ENCODE measurements at regions of chr2 and their contacts with region 1.

Region 1: DNA sequence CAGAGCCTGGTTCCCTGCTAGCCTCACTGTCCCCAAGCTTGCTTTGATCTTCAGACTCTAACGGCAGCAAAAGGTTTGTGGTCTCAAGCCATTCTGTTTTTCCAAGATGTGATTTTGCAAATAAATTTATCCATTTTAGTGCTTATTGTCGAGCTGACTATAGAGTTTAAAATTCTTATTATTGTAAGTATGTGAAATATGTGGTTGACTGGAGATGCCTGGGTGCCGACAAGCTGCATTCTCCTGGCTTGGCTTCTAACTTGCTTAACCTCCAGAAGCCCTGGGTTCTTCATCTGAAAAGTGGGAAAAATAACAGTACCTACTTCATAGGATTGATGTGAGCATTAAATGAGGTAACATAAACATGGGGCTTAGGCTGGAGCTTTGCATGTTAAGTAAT is 9.9 kb upstream of the EDAR start:
- DNase-seq: no peak
- H3K4me3 ChIP-seq: no peak overlapping the region
- H3K27ac ChIP-seq: no peak overlapping the region
- H3K4me1 ChIP-seq: no peaks in the 10 kb centered on the region
- H3K27me3 ChIP-seq: no peaks in the 10 kb centered on the region; a peak in 1 of 7 replicates
- CTCF ChIP-seq: no peak
- EP300 ChIP-seq: no peak
- POLR2A ChIP-seq: no peak
- RAD21 ChIP-seq: no peak

Region 2: GRCh38 chr2:108935301-108935741 is 63.6 kb before region 1 on chr2:
- CTCF ChIA-PET with region 1: interaction called, 17 read pairs
- POLR2A ChIA-PET with region 1: no interaction called
- DNase-seq: no peak
- H3K4me3 ChIP-seq: no peak overlapping the region
- H3K27ac ChIP-seq: no peak overlapping the region
- H3K4me1 ChIP-seq: peaks cover 4 to 15% (median 11%) of the 10 kb centered on the region in 4 experiments
- H3K27me3 ChIP-seq: no peaks in the 10 kb centered on the region
- CTCF ChIP-seq: no peak
- EP300 ChIP-seq: no peak
- POLR2A ChIP-seq: no peak
- RAD21 ChIP-seq: no peak

Region 3: DNA sequence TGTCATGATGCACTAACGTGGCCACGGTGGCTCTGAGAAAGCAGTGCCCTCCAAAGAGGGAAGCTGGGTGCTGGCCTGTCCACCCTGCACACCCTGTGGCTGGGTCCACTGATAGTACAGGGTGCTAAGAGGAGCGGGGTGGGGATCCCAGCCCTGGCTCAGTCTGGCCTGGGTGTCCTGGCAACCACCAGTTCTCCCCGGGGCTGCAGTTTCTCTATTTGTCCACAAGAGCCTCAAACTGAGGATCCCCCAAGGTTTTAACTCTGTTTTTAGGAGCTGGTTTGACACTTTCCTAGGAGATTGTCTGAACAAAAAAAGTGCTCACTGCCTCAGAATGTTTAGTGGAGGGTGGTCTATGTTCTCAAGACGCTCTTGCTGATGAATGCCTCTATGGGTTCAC is 38.9 kb before region 1 on chr2:
- CTCF ChIA-PET with region 1: interaction called, 11 read pairs
- POLR2A ChIA-PET with region 1: no interaction called
- DNase-seq: no peak
- H3K4me3 ChIP-seq: no peak overlapping the region
- H3K27ac ChIP-seq: no peak overlapping the region
- H3K4me1 ChIP-seq: peaks cover 0 to 10% (median 1%) of the 10 kb centered on the region in 4 experiments; a peak in 3 of 7 replicates
- H3K27me3 ChIP-seq: no peaks in the 10 kb centered on the region
- CTCF ChIP-seq: peak in 2 of 3 experiments; percentile 1 to 33; a peak in 2 of 4 replicates
- EP300 ChIP-seq: no peak
- POLR2A ChIP-seq: no peak
- RAD21 ChIP-seq: peak in 1 of 2 experiments; percentile 15; a peak in 1 of 4 replicates

Region 4: DNA sequence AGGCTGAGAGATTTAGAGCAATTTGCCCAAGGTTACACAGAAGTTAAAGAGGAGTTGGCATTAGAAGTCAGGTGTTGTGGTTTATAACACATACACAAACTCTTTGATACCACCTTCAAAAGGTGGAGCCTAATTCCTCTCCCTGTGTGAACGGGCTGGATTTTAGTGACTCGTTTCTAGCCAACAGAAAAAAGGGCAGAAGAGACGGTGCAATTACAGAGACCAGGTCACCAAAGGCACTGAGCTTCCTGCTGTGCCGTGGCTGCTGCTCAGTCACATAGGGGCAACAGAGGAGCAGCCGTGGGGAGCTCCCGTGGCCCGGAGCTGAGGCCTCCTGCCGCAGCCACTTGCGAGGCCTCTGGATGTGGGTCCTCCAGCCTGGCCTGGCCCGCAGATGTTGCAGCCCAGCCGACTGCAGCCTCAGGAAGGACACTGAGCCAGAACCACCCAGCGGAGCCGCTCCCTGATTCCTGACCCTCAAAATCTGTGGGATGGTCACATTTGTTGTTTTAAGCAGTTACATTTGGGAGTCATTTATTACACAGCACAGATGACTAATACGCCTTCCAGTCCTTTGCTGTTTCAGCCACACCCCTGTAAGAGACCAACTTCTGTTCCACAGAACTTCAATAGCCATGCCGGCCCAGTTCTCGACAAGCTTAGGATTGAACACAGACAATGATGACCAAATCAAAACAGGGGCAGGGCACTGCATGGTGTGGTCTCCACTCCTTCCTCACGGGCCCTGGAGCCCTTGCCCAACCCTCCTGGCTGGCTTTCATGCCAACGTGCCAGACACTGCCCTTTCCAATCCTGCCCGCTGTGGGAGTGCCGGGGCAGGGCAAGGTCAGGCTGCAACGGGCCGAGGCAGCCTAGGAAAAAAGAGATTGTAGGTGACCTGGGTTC is 27.0 kb before region 1 on chr2:
- CTCF ChIA-PET with region 1: interaction called, 13 read pairs
- POLR2A ChIA-PET with region 1: no interaction called
- DNase-seq: no peak
- H3K4me3 ChIP-seq: no peak overlapping the region
- H3K27ac ChIP-seq: no peak overlapping the region
- H3K4me1 ChIP-seq: no peaks in the 10 kb centered on the region; a peak in 1 of 7 replicates
- H3K27me3 ChIP-seq: no peaks in the 10 kb centered on the region
- CTCF ChIP-seq: no peak
- EP300 ChIP-seq: no peak
- POLR2A ChIP-seq: no peak
- RAD21 ChIP-seq: no peak

Region 5: DNA sequence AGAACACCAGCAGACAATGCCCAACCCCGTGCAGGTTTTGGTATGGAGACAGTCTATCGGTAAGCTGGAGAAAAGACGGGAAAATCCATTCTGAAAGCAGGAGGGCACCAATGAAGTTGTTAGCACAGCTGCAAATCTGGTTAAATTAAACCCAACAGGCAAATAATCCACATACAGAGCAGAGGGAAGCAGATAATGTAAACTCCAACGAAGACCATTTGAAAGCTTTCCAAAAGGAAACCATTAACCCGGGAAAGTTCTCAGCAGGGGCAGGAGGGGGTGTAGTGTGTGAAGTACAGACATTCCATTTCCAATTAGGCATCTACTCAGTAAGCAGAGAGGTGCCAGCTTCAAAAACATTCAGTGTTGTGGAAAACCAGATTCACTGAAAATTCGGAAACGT is 20.2 kb before region 1 on chr2:
- CTCF ChIA-PET with region 1: interaction called, 13 read pairs
- POLR2A ChIA-PET with region 1: no interaction called
- DNase-seq: no peak
- H3K4me3 ChIP-seq: no peak overlapping the region
- H3K27ac ChIP-seq: no peak overlapping the region
- H3K4me1 ChIP-seq: no peaks in the 10 kb centered on the region
- H3K27me3 ChIP-seq: no peaks in the 10 kb centered on the region
- CTCF ChIP-seq: no peak
- EP300 ChIP-seq: no peak
- POLR2A ChIP-seq: no peak
- RAD21 ChIP-seq: no peak

Region 6: GRCh38 chr2:109009920-109010610 is 11.2 kb after region 1 on chr2:
- CTCF ChIA-PET with region 1: interaction called, 24 read pairs
- POLR2A ChIA-PET with region 1: no interaction called
- DNase-seq: no peak
- H3K4me3 ChIP-seq: no peak overlapping the region
- H3K27ac ChIP-seq: no peak overlapping the region
- H3K4me1 ChIP-seq: peaks cover 0 to 5% (median 2%) of the 10 kb centered on the region in 4 experiments; a peak in 3 of 7 replicates
- H3K27me3 ChIP-seq: no peaks in the 10 kb centered on the region
- CTCF ChIP-seq: no peak
- EP300 ChIP-seq: no peak
- POLR2A ChIP-seq: no peak
- RAD21 ChIP-seq: no peak

Region 7: GRCh38 chr2:109017017-109017416 is 18.1 kb after region 1 on chr2:
- CTCF ChIA-PET with region 1: interaction called, 24 read pairs
- POLR2A ChIA-PET with region 1: no interaction called
- DNase-seq: no peak
- H3K4me3 ChIP-seq: no peak overlapping the region
- H3K27ac ChIP-seq: no peak overlapping the region
- H3K4me1 ChIP-seq: peaks cover 3 to 16% (median 10%) of the 10 kb centered on the region in 4 experiments
- H3K27me3 ChIP-seq: peaks cover 0 to 2% (median 0%) of the 10 kb centered on the region in 4 experiments; a peak in 4 of 7 replicates
- CTCF ChIP-seq: no peak
- EP300 ChIP-seq: no peak
- POLR2A ChIP-seq: no peak
- RAD21 ChIP-seq: no peak

Region 8: DNA sequence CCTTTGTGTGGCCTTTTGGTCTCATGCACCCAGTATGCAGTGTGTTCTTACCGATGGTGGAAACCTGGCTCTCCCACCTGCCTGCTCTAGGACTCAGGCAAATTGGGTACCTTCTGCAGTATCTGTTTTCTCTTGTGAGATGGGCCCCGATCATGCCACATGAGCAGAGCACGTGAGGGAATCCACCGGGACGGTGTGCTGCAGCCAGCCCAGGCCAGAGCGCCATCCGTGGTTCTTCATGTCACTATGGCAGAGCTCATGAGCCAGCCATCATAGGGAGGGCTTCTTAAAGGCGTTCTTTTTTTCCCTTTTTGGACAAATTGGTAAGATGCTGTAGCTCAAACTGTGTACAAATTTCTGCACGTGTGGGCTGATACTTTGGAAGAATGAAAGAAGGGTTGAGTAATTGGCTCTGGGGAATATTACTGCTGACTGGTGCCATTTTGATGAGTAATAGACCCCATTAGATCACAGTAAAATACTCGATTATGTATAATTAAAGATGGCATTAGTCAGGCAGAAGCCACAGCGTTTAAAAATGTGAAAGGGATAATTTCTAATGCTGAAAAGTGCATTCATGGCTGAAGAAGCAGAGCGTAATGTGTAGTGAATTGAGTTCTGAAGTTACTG is 149.3 kb after region 1 on chr2:
- CTCF ChIA-PET with region 1: no interaction called
- POLR2A ChIA-PET with region 1: no interaction called
- DNase-seq: no peak
- H3K4me3 ChIP-seq: no peak overlapping the region
- H3K27ac ChIP-seq: no peak overlapping the region
- H3K4me1 ChIP-seq: no peaks in the 10 kb centered on the region
- H3K27me3 ChIP-seq: no peaks in the 10 kb centered on the region
- CTCF ChIP-seq: no peak
- EP300 ChIP-seq: no peak
- POLR2A ChIP-seq: no peak
- RAD21 ChIP-seq: no peak